ENCODE measurements at regions of chr17 and their contacts with region 1.

Region 1: DNA sequence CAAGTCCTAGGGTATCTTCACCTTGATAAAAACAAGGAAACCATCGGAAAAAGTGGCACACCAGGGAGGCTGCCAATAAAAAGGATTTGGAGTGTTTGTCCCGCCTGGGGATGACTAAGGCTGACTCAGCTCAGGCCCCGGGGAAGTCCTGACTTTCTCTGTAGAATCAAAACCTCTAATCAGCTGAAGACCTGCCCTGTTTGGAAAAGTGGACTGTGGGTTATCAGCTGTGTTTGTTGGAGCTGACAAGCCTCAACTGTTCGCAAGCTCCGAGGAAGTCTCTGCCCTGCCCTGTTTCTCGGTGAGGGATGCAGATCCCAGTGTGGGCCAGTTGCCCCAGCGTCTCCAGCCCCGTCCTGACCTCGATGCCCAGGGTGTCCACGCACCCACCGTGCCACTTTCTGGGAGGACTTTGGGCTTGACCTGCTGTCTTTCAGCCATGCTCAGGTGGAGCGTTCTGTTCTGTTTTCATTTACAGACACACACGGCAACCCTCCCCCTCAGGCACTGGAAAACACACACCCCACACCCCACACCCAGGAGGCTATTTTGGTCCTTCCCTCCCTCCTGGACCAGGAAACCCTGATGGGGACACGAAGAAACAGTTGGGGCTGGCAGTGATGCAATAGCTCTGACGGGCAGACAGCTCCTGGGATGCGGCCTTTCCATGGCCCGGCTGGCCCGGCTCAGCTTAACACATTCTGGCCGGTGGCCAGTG is 27.6 kb upstream of the PITPNA start:
- DNase-seq: no peak
- ATAC-seq: no peak
- H3K4me3 Mint-ChIP-seq: no peak overlapping the region
- H3K27ac Mint-ChIP-seq: peak overlapping the region; percentile 46
- H3K4me1 Mint-ChIP-seq: peaks cover 48% of the 10 kb centered on the region
- H3K27me3 Mint-ChIP-seq: no peaks in the 10 kb centered on the region
- CTCF ChIP-seq: no peak

Region 2: DNA sequence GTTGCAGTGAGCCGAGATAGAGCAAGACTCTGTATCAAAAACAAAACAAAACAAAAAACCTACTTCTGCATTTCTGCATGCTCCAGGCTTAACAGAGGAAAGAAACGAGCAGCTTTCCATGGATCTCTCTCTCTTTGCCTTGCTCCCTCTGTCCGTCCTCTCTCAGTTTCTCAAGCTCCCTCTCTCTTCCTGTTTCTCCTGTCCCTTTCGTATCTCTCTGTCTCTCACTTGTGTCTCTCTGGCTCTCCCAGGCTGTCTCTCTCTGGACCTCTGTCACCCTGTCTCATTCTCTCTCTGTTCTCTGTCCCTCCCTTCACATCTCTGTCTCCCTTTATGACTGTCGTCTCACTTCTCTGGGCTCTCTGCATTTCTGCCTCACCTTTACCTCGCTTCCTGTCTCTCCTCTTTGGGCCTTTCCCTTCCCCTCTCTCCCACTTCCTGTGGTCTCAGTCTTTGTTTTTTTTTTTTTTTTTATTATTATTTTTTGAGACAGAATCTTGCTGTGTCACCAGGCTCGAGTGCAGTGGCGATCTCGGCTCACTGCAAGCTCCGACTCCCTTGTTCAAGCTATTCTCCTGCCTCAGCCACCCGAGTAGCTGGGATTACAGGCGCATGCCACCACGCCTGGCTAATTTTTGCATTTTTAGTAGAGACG is 23.5 kb before region 1 on chr17:
- CTCF ChIA-PET with region 1: no interaction called
- POLR2A ChIA-PET with region 1: interaction called, 19 read pairs
- intact Hi-C with region 1: no loop called
- DNase-seq: no peak
- ATAC-seq: peak; percentile 50
- H3K4me3 Mint-ChIP-seq: peak overlapping the region; percentile 75
- H3K27ac Mint-ChIP-seq: peak overlapping the region; percentile 84
- H3K4me1 Mint-ChIP-seq: peaks cover 26% of the 10 kb centered on the region
- H3K27me3 Mint-ChIP-seq: no peaks in the 10 kb centered on the region
- CTCF ChIP-seq: no peak

Region 3: GRCh38 chr17:1606352-1607033 is 16.3 kb after region 1 on chr17:
- CTCF ChIA-PET with region 1: no interaction called
- POLR2A ChIA-PET with region 1: interaction called, 118 read pairs
- intact Hi-C with region 1: loop called (anchors 1 kb)
- DNase-seq: no peak
- ATAC-seq: no peak
- H3K4me3 Mint-ChIP-seq: peak overlapping the region; percentile 67
- H3K27ac Mint-ChIP-seq: peak overlapping the region; percentile 86
- H3K4me1 Mint-ChIP-seq: peaks cover 36% of the 10 kb centered on the region
- H3K27me3 Mint-ChIP-seq: no peaks in the 10 kb centered on the region
- CTCF ChIP-seq: no peak

Region 4: DNA sequence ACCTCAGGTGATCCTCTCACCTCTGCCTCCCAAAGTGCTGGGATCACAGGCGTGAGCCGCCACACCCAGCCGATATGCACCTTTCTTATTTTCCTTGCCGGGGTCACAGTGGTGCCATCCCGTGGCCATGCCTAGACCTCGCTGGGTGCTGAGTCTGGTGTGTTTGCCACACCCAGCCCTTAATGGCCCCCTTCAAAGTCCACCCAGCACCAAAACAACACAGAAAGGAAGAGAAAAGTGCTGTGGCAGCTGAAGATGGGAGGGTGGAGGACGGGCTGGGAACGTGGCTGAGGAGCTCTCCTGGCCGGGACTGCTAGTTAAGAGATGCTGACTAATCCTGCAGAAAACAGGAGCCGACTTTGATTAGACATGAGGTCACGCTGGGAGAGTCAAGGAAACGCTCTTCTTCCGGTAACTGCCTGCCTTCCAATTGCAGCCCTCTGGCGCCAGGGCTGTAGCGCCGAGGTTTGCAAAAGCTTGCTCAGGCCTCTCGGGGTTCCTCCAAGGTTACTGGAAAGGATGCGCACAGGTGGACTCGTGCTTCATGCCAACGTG is 27.5 kb after region 1 on chr17:
- CTCF ChIA-PET with region 1: no interaction called
- POLR2A ChIA-PET with region 1: interaction called, 23 read pairs
- intact Hi-C with region 1: no loop called
- DNase-seq: no peak
- ATAC-seq: no peak
- H3K4me3 Mint-ChIP-seq: no peak overlapping the region
- H3K27ac Mint-ChIP-seq: peak overlapping the region; percentile 30
- H3K4me1 Mint-ChIP-seq: peaks cover 5% of the 10 kb centered on the region
- H3K27me3 Mint-ChIP-seq: no peaks in the 10 kb centered on the region
- CTCF ChIP-seq: no peak

Region 5: GRCh38 chr17:1643293-1643998 is 53.3 kb after region 1 on chr17:
- CTCF ChIA-PET with region 1: no interaction called
- POLR2A ChIA-PET with region 1: interaction called, 12 read pairs
- intact Hi-C with region 1: loop called (anchors 1 kb)
- DNase-seq: peak; percentile 55
- ATAC-seq: peak; percentile 35
- H3K4me3 Mint-ChIP-seq: peak overlapping the region; percentile 85
- H3K27ac Mint-ChIP-seq: no peak overlapping the region
- H3K4me1 Mint-ChIP-seq: peaks cover 41% of the 10 kb centered on the region
- H3K27me3 Mint-ChIP-seq: no peaks in the 10 kb centered on the region
- CTCF ChIP-seq: no peak

Region 6: GRCh38 chr17:1764284-1764683 is 174.1 kb after region 1 on chr17:
- CTCF ChIA-PET with region 1: no interaction called
- POLR2A ChIA-PET with region 1: no interaction called
- intact Hi-C with region 1: no loop called
- DNase-seq: peak; percentile 41
- ATAC-seq: peak; percentile 85
- H3K4me3 Mint-ChIP-seq: peak overlapping the region; percentile 53
- H3K27ac Mint-ChIP-seq: peak overlapping the region; percentile 72
- H3K4me1 Mint-ChIP-seq: peaks cover 46% of the 10 kb centered on the region
- H3K27me3 Mint-ChIP-seq: no peaks in the 10 kb centered on the region
- CTCF ChIP-seq: no peak

Measured in activated B cell treated with CpG ODN at 0.5 μM for 24 hours (primary cell).